Right lobe of liver (tissue), 6 donors: ENCODE measurements at regions of chr15 and their contacts with region 1.

Region 1: DNA sequence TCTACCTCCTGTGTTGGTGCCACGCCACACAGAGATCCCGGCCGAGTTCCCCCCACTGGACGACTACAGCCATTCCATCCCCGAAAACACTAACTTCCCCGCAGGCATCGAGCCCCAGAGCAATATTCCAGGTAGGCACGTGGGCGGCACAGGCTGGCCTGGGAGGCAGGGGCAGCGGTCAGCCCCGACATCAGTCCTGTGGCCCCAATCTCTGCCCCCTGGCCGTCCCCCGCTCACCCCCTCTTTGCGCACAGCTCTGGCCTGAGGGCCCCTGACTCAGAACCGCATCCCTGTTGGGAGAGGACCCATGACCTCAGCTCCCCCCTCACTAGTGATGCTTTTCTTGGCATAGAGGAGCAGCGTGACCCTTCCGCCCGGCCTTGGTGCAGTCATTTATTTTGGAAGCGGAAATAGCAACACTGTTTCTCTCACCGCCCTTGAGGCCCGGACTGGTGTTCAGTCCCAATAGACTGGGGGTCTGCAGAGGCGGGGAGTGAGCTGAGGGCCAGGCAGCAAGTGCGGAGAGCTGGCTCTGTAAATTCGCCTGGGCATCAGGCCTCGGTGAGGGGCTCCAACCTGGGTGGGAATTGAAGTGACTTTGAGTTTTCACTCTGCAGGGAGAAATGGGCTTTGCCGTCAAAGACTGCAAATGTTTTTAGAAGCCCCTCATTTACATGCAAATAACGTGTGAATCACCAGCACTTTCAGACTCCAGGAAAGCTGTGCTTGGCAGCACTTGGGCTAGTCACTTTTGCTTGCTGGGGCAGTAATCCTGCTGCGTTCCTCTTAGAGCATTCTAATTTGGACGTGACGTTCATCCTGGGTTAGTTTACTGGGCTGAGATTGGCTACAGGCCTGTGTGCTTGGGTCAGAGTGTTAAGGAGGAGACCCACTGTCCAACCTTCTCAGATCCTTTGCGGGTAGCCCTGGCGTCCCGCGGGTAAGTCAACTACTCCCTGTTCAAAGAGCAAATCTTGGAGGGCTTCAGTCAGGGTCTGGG is 88.9 kb downstream of the AAGAB start:
- DNase-seq: no peak
- ATAC-seq: no peak
- H3K4me3 ChIP-seq: no peak overlapping the region
- H3K27ac ChIP-seq: no peak overlapping the region
- H3K4me1 ChIP-seq: peaks cover 0 to 16% (median 3%) of the 10 kb centered on the region in 4 donors
- H3K27me3 ChIP-seq: no peaks in the 10 kb centered on the region
- CTCF ChIP-seq: no peak
- POLR2A ChIP-seq: no peak

Region 2: GRCh38 chr15:66955871-66956585 is 209.5 kb before region 1 on chr15:
- intact Hi-C with region 1: loop called in 1 of 2 experiments (anchors 10 kb)
- DNase-seq: peak in 1 of 3 donors; percentile 15
- ATAC-seq: peak in 1 of 4 donors; percentile 25
- H3K4me3 ChIP-seq: no peak overlapping the region
- H3K27ac ChIP-seq: no peak overlapping the region
- H3K4me1 ChIP-seq: no peaks in the 10 kb centered on the region
- H3K27me3 ChIP-seq: no peaks in the 10 kb centered on the region
- CTCF ChIP-seq: no peak
- POLR2A ChIP-seq: no peak

Region 3: DNA sequence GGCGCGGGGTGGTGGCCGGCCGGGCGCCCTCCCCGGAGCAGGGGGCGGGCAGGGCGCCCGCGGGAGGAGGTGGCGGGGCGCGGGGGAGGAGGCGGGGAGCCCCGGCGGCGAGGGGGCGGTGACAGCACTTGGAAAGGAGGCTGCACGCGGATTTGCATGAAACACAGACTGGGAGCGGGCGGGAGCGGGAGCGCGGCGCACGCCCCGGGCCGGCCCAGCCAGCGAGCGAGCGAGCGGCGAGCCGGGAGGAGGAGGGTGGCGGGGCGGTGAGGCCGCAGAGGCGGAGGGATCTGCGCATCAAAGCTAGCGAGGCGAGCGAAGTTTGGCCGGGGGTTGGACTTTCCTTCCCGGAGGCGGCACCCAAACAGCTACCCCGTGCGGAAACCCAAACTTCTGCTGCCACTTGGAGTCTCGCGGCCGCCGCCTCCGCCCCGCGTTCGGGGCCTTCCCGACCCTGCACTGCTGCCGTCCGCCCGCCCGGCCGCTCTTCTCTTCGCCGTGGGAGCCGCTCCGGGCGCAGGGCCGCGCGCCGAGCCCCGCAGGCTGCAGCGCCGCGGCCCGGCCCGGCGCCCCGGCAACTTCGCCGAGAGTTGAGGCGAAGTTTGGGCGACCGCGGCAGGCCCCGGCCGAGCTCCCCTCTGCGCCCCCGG is 100.0 kb before region 1 on chr15 and contains the start of gene SMAD3:
- intact Hi-C with region 1: loop called (anchors 10 kb)
- DNase-seq: peak; percentile 94 to 97 (median 96)
- ATAC-seq: peak; percentile 63 to 85 (median 74)
- H3K4me3 ChIP-seq: peak within 1 kb of the TSS; percentile 63 to 76 (median 72)
- H3K27ac ChIP-seq: peak within 1 kb of the TSS; percentile 89 to 97 (median 91)
- H3K4me1 ChIP-seq: peaks cover 0 to 57% (median 19%) of the 10 kb centered on the region in 4 donors
- H3K27me3 ChIP-seq: no peaks in the 10 kb centered on the region
- CTCF ChIP-seq: peak in 1 of 4 donors; percentile 7
- POLR2A ChIP-seq: peak; percentile 89
- total RNA-seq, gene SMAD3: 9.2 to 34.0 (median 14.4) TPM

Region 4: DNA sequence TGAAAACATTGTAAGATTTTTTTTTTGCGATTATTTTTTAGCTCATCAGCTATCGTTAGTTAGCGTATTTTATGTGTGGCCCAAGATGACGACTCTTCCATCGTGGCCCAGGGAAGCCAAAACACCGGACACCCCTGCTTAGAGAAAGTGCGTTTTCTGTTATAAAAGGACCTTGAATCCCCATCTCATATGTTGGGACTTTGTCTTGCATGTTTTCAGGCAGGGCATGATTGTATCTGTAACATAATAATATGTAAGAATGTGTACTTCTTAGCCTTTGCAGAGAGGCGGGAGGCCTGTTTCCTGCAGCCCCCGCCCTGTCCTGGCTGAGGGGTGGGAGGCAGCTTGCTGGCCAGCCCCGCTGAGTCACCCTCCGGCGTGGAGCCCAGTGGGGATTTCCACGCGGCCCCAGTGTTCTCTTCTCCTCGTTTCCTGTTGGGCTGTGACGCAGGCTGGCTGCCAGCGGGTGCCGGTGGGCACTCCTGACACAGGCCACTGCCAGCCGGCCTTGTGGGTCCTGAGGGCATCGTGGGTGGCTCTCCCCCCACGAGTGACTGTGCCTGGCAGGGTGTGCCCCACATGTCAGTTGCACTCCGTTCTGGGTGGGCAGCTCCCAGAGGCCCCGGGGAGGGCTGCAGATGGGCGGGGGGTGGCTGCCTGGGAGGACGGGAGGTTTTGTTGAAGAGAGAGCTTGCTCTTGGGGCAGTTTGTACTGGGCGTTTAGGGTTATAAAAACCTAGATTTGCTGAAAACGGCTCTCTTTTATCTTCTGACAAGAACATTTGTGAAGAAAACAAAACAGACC is 44.5 kb before region 1 on chr15:
- intact Hi-C with region 1: no loop called
- DNase-seq: peak; percentile 61 to 84 (median 79)
- ATAC-seq: peak; percentile 62 to 80 (median 68)
- H3K4me3 ChIP-seq: no peak overlapping the region
- H3K27ac ChIP-seq: peak overlapping the region; percentile 61 to 71 (median 65)
- H3K4me1 ChIP-seq: peaks cover 0 to 66% (median 19%) of the 10 kb centered on the region in 4 donors
- H3K27me3 ChIP-seq: no peaks in the 10 kb centered on the region
- CTCF ChIP-seq: no peak
- POLR2A ChIP-seq: no peak

Region 5: GRCh38 chr15:69014454-69014853 is 1848.9 kb after region 1 on chr15 and contains the start of gene NOX5:
- intact Hi-C with region 1: no loop called
- DNase-seq: no peak
- ATAC-seq: no peak
- H3K4me3 ChIP-seq: no peak within 1 kb of the TSS
- H3K27ac ChIP-seq: no peak within 1 kb of the TSS
- H3K4me1 ChIP-seq: peaks cover 0 to 3% (median 0%) of the 10 kb centered on the region in 4 donors
- H3K27me3 ChIP-seq: no peaks in the 10 kb centered on the region
- CTCF ChIP-seq: no peak
- POLR2A ChIP-seq: no peak
- total RNA-seq, gene NOX5: 0.06 to 0.15 (median 0.11) TPM in 3 of 6 experiments, not detected in the others